Caco-2 (cell line): ENCODE measurements at regions of chr3 and their contacts with region 1.

Region 1: GRCh38 chr3:24582431-24583403 is 88.1 kb upstream of the THRB start:
- DNase-seq: peak in 1 of 2 experiments; percentile 12
- H3K4me3 ChIP-seq: no peak overlapping the region
- H3K4me3 Mint-ChIP-seq: no peak overlapping the region
- H3K27ac Mint-ChIP-seq: no peak overlapping the region
- H3K4me1 ChIP-seq: no peaks in the 10 kb centered on the region
- H3K4me1 Mint-ChIP-seq: peaks cover 7% of the 10 kb centered on the region
- H3K27me3 ChIP-seq: no peaks in the 10 kb centered on the region
- H3K27me3 Mint-ChIP-seq: no peaks in the 10 kb centered on the region
- CTCF ChIP-seq: no peak

Region 2: DNA sequence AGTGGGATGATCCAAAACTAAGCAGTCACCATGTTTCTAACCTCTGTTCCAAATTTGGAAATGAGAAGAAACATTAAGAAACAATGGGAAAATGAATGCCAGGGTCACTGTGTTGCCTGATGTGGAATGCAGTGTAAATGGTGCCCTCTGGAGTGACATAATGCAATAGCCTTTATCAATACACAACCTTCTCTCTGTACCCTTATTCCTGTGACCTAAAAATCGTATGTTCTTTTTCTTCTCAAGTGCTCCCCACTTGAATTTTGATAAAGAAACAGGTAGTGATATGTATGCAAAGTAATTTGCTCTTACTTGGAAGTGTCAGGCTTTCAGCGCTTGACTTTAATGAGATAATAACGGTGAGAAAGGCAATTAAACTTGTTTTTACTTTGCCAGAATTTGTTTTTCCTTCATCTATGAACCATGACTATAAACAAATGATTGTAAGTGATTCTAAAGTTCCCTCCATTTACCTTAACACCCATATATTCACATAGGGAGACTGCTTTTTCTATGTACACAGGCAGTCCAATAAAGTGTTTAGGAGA is 57.7 kb after region 1 on chr3:
- CTCF ChIA-PET with region 1: no interaction called
- POLR2A ChIA-PET with region 1: no interaction called
- intact Hi-C with region 1: loop called (anchors 2 kb)
- DNase-seq: peak in 1 of 2 experiments; percentile 32
- H3K4me3 ChIP-seq: no peak overlapping the region
- H3K4me3 Mint-ChIP-seq: no peak overlapping the region
- H3K27ac Mint-ChIP-seq: peak overlapping the region; percentile 60
- H3K4me1 ChIP-seq: peaks cover 29% of the 10 kb centered on the region
- H3K4me1 Mint-ChIP-seq: peaks cover 15% of the 10 kb centered on the region
- H3K27me3 ChIP-seq: no peaks in the 10 kb centered on the region
- H3K27me3 Mint-ChIP-seq: no peaks in the 10 kb centered on the region
- CTCF ChIP-seq: peak; percentile 49 to 69